ENCODE measurements at regions of chr18 and their contacts with region 1.

Region 1: GRCh38 chr18:69727912-69728572 is 219.6 kb downstream of the CD226 start:
- DNase-seq: no peak
- ATAC-seq: no peak
- H3K4me3 ChIP-seq: no peak overlapping the region
- H3K27ac ChIP-seq: no peak overlapping the region
- H3K4me1 ChIP-seq: peaks cover 0 to 2% (median 0%) of the 10 kb centered on the region in 12 donors
- H3K27me3 ChIP-seq: no peaks in the 10 kb centered on the region
- CTCF ChIP-seq: no peak
- POLR2A ChIP-seq: no peak

Region 2: GRCh38 chr18:69787825-69788547 is 59.9 kb after region 1 on chr18:
- intact Hi-C with region 1: loop called in 1 of 10 experiments (anchors 10 kb)
- DNase-seq: no peak
- ATAC-seq: no peak
- H3K4me3 ChIP-seq: no peak overlapping the region
- H3K27ac ChIP-seq: no peak overlapping the region
- H3K4me1 ChIP-seq: no peaks in the 10 kb centered on the region
- H3K27me3 ChIP-seq: no peaks in the 10 kb centered on the region
- CTCF ChIP-seq: no peak
- POLR2A ChIP-seq: no peak